MCF 10A (cell line): ENCODE measurements at regions of chr22 and their contacts with region 1.

Region 1: GRCh38 chr22:40177738-40178416 is at the start of gene TNRC6B:
- DNase-seq: peak; percentile 98
- H3K4me3 Mint-ChIP-seq: peak within 1 kb of the TSS; percentile 67
- H3K27ac Mint-ChIP-seq: peak within 1 kb of the TSS; percentile 80
- H3K4me1 Mint-ChIP-seq: peaks cover 35% of the 10 kb centered on the region
- H3K27me3 Mint-ChIP-seq: no peaks in the 10 kb centered on the region
- CTCF ChIP-seq: no peak
- total RNA-seq, gene TNRC6B: 27.1 and 39.3 TPM in 2 replicates

Region 2: GRCh38 chr22:39932918-39933649 is 244.8 kb before region 1 on chr22:
- CTCF ChIA-PET with region 1: no interaction called
- POLR2A ChIA-PET with region 1: no interaction called
- intact Hi-C with region 1: no loop called
- DNase-seq: peak; percentile 66
- H3K4me3 Mint-ChIP-seq: no peak overlapping the region
- H3K27ac Mint-ChIP-seq: no peak overlapping the region
- H3K4me1 Mint-ChIP-seq: no peaks in the 10 kb centered on the region
- H3K27me3 Mint-ChIP-seq: peaks cover 20% of the 10 kb centered on the region
- CTCF ChIP-seq: peak; percentile 76

Region 3: GRCh38 chr22:40116496-40117200 is 61.2 kb before region 1 on chr22:
- CTCF ChIA-PET with region 1: no interaction called
- POLR2A ChIA-PET with region 1: no interaction called
- intact Hi-C with region 1: no loop called
- DNase-seq: no peak
- H3K4me3 Mint-ChIP-seq: no peak overlapping the region
- H3K27ac Mint-ChIP-seq: no peak overlapping the region
- H3K4me1 Mint-ChIP-seq: peaks cover 5% of the 10 kb centered on the region
- H3K27me3 Mint-ChIP-seq: no peaks in the 10 kb centered on the region
- CTCF ChIP-seq: no peak

Region 4: GRCh38 chr22:40157330-40157945 is 20.4 kb before region 1 on chr22:
- CTCF ChIA-PET with region 1: no interaction called
- POLR2A ChIA-PET with region 1: interaction called, 30 read pairs
- intact Hi-C with region 1: no loop called
- DNase-seq: no peak
- H3K4me3 Mint-ChIP-seq: no peak overlapping the region
- H3K27ac Mint-ChIP-seq: no peak overlapping the region
- H3K4me1 Mint-ChIP-seq: no peaks in the 10 kb centered on the region
- H3K27me3 Mint-ChIP-seq: no peaks in the 10 kb centered on the region
- CTCF ChIP-seq: no peak

Region 5: DNA sequence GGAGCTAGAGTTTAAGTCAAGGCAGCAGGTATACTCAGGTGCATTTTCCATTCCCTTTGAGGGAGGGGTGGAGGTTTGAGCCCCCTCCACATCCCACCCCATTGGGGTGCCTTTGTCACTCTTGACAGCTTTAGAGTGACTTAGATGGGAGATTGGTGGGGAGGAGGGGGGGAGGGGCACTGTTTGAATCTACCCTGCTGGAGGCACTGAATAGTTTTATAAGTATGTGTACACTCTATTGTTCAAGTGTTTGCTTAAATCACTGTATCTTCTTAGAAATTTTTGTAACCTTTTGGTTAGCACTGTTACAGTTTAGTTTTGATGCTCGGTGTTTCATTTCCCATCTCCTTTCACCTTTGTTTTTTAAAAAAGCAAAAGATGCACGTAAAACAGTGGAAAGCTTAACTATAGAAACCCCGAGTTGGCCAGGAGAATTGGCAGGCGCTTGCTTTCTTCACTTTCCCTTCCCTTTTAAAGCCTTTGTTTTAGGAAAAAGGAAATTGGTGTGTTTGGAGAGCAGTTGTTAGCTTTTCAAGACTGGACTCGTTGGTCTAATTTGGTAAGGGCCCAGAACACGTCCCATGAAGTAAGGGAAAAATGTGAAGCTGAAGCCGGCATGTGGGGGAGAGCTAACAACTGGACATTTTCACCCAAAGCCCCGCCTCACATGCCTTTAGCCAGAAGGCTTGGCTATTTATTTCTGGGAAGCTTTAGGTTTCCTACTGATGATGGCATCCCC is 42.6 kb after region 1 on chr22:
- CTCF ChIA-PET with region 1: no interaction called
- POLR2A ChIA-PET with region 1: interaction called, 23 read pairs
- intact Hi-C with region 1: no loop called
- DNase-seq: peak; percentile 62
- H3K4me3 Mint-ChIP-seq: peak overlapping the region; percentile 14
- H3K27ac Mint-ChIP-seq: peak overlapping the region; percentile 70
- H3K4me1 Mint-ChIP-seq: peaks cover 56% of the 10 kb centered on the region
- H3K27me3 Mint-ChIP-seq: no peaks in the 10 kb centered on the region
- CTCF ChIP-seq: no peak

Region 6: GRCh38 chr22:40258451-40259046 is 80.7 kb after region 1 on chr22:
- CTCF ChIA-PET with region 1: no interaction called
- POLR2A ChIA-PET with region 1: interaction called, 40 read pairs
- intact Hi-C with region 1: no loop called
- DNase-seq: peak; percentile 91
- H3K4me3 Mint-ChIP-seq: peak overlapping the region; percentile 51
- H3K27ac Mint-ChIP-seq: peak overlapping the region; percentile 93
- H3K4me1 Mint-ChIP-seq: peaks cover 44% of the 10 kb centered on the region
- H3K27me3 Mint-ChIP-seq: no peaks in the 10 kb centered on the region
- CTCF ChIP-seq: no peak

Region 7: GRCh38 chr22:40628354-40629042 is 450.6 kb after region 1 on chr22:
- CTCF ChIA-PET with region 1: no interaction called
- POLR2A ChIA-PET with region 1: no interaction called
- intact Hi-C with region 1: no loop called
- DNase-seq: peak; percentile 68
- H3K4me3 Mint-ChIP-seq: peak overlapping the region; percentile 30
- H3K27ac Mint-ChIP-seq: peak overlapping the region; percentile 65
- H3K4me1 Mint-ChIP-seq: peaks cover 39% of the 10 kb centered on the region
- H3K27me3 Mint-ChIP-seq: no peaks in the 10 kb centered on the region
- CTCF ChIP-seq: no peak